ENCODE measurements at regions of chr2 and their contacts with region 1.

Region 1: DNA sequence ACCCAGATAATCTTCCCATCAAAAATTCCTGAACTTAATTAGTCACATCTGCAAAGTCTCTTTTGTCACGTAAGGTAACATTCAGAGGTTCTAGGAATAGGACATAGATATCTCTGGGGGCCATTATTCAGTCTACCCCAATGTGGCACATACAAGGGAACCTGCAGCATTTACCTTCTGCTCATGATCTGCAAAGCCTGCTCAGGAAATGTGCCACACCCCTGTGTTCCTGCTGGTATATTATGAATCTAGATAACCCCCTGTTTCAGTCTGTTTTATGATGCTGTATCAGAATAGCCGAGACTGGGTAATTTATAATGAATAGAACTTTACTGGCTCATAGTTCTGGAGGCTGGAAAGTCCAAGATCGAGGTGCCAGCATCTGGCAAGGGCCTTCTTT is 103.5 kb downstream of the ARL4C start:
- DNase-seq: no peak
- ATAC-seq: no peak

Region 2: DNA sequence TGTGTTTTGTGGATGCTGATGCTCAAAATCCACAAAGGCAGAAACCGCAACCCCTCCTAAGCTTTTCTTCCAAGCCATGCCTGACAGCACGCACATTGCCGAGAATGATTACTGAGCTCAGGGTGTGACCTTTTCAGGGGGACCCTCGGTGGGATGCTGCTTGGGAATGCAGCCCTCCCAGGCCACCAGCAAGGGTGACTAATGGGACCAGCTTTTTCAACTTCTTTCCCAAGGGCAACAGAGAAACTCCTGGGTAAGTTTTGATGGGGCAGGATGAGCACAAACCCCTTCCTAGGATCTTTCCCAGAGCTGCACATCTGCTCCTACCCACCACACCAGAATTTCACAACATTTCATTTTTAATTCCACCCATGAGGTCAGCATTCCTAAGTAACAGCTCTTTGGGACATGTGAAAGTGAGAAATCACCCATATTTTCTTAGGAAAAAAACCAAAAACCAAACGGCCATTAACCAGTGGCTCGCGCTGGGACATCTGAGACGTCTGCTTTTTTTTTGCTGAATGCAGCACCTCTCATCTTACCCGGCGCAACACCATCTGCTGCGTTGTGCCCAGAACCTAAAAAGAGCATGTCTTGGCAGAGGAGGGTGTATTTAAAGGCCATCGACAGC is 15.5 kb before region 1 on chr2:
- intact Hi-C with region 1: loop called (anchors 1 kb)
- DNase-seq: no peak
- ATAC-seq: peak; percentile 93

Region 3: GRCh38 chr2:234674781-234675201 is 281.4 kb after region 1 on chr2:
- intact Hi-C with region 1: no loop called
- DNase-seq: no peak
- ATAC-seq: no peak

Measured in sciatic nerve (tissue), 2 donors.